GM13977 (cell line): ENCODE measurements at regions of chr11 and their contacts with region 1.

Region 1: DNA sequence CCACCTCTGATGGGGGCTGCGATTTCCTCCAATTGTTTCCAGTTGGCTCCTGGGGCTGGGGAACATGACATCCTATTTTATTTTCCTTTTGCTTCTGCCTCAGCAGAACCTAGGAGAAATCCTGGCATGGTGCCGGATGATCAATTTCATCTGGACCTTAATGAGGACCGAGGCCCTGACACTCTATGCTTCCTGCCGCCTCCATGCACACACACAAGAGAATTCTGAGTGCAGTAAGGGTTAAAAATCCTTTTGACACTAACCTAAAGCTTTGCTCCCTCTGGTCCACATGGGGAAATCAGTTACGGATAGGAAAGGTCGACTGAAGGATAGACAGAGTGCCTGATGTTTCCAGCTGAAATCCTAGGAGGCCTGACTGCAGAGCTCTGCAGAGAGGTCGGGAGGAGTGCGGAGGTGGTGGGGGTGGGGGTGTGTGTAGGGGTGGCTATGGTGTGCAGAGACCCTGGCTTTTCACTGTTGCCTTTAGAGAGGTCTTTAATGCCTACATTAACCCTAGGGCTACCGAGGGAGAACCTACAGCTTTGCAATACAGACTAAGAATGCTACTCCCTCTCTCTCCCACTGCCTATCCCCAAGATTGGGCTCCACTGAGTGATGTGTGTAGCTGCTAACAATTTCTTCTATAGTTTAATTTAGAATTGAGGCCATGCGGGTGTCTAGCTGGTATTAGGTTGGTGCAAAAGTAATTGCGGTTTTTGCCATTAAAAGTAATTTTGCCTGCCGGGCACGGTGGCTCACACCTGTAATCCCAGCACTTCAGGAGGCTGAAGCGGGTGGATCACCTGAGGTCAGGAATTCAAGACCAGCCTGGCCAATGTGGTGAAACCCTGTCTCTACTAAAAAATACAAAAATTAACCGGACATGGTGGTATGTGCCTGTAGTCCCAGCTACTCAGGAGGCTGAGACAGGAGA is 53.6 kb upstream of the INCENP start:
- DNase-seq: no peak
- CTCF ChIP-seq: no peak

Region 2: GRCh38 chr11:61888043-61888442 is 182.2 kb before region 1 on chr11:
- in situ Hi-C with region 1: loop called (anchors 10 kb)
- DNase-seq: no peak
- CTCF ChIP-seq: no peak

Region 3: GRCh38 chr11:62179995-62180394 is 109.7 kb after region 1 on chr11:
- in situ Hi-C with region 1: no loop called
- DNase-seq: no peak
- CTCF ChIP-seq: no peak

Region 4: DNA sequence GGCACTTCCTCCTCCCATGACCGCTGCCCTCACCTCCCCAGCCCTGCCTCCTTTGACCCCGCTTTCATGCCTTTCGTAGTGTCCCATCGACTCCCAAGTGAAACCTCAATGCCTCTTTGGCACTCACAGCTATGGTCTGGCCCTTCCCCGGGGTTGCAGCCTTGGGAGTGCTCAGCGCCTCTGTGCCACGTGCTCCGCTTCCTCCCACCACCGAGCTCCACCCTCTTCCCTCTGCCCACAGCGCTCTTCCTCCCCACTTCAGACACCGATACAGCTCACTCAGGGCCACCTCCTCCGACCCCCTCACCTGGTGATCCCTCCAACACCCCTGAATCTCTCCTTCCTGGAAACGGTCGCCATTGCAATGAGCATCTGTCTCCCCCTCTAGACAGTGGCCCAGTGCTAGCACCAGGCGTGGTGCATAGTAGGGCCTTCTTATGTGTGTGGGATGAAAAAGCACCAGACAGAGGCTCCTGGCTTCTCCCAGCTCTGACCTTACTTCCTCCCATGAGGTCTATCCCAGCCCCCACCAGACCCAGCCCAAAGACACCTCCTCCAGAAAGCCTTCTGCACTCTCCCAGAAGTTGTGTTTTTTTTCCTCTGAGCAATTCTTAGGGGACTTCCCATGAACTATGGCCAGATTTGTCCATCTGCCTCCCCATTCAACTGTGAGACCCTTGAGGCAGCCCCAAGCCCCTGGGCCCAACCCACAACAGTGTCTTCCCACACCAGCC is 332.1 kb after region 1 on chr11:
- in situ Hi-C with region 1: no loop called
- DNase-seq: no peak
- CTCF ChIP-seq: no peak